IMR-90 (cell line): ENCODE measurements at regions of chr6 and their contacts with region 1.

Region 1: DNA sequence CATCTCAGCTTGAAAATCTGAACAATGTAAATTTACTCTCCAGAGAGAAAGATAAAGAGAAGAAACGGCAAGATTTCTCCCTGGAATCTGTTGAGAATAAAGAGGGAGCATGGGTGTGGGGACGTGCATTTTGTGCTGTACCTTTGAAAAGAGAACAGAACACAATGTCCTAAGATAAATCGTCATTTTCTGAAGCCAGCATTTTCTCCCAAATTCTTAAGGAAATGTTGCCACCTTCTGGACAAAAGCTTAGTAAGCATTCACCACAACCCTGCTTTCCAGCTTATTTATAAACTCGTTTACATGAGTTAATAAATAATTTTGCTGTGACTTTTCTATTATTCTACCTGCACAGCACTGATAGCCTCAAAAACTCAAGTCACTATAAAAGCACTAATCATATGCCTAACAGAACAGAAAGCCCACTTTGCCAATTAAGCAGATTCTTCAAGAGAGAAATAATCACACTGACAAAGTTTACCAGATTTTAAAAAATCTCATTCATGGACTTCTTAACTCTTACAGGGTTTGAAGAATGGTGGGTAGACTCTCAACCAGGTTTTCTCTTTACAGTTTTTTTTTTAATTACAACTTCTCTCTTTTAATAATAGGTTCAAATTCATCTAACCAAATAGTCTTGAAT is 155.8 kb downstream of the MBOAT1 start:
- DNase-seq: peak; percentile 63
- ATAC-seq: peak; percentile 61; the same call in 1 of the 2 replicates
- H3K4me3 ChIP-seq: no peak overlapping the region
- H3K27ac ChIP-seq: no peak overlapping the region
- H3K4me1 ChIP-seq: no peaks in the 10 kb centered on the region
- H3K27me3 ChIP-seq: no peaks in the 10 kb centered on the region; the same call in 1 of the 2 replicates
- CTCF ChIP-seq: peak; percentile 74
- POLR2A ChIP-seq: no peak
- RAD21 ChIP-seq: peak; percentile 72

Region 2: DNA sequence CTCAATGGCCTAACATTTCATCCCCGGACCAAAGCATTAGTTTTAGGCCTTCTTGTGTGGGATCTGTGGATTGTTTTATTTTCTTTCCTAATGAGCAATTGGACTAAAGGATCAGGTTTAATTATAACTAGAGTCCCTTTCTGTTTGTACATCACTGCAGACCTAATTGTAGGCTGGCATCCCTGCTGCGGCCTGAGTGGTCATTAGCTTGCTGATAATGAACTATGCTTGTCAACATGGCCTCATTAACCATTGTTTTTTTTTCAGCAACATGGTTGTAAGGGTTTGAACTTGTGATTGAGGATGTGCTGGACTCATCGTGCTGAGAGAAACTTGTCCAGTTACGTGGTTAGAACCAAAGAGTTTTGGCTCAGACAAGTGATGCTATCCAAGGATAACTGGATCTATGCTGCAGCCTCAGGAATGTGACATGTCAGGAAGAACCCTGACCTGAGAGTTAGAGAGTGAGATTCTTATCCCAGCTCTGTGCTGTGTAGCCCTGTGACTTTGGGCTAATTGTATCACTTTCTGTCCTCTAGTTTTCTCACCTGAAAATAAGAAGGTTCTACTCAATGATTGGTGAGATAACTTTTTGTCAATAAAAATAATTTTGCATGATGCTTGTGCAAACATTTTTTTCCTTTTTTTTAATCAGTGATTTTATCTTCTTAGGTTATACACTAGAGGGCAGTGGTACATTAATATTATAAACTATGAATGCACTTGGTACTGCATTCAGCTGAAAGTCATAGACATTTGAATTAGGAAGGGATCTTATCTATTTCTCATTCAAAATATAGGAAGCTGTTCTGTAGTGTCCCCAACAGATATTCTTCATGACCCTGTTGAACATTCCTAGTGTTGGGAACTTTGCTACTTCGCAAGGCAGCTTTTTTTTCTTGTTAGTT is 1528.4 kb before region 1 on chr6:
- CTCF ChIA-PET with region 1: no interaction called
- POLR2A ChIA-PET with region 1: no interaction called
- dilution Hi-C with region 1: no loop called
- in situ Hi-C with region 1: no loop called
- intact Hi-C with region 1: loop called (anchors 1 kb)
- DNase-seq: peak; percentile 13
- ATAC-seq: peak; percentile 65
- H3K4me3 ChIP-seq: no peak overlapping the region
- H3K27ac ChIP-seq: no peak overlapping the region
- H3K4me1 ChIP-seq: no peaks in the 10 kb centered on the region
- H3K27me3 ChIP-seq: peaks cover 9% of the 10 kb centered on the region; the same call in 1 of the 2 replicates
- CTCF ChIP-seq: peak; percentile 45
- POLR2A ChIP-seq: no peak
- RAD21 ChIP-seq: peak; percentile 39

Region 3: GRCh38 chr6:18595774-18596530 is 1460.5 kb before region 1 on chr6:
- CTCF ChIA-PET with region 1: interaction called, 10 read pairs
- POLR2A ChIA-PET with region 1: interaction called, 8 read pairs
- dilution Hi-C with region 1: no loop called
- in situ Hi-C with region 1: loop called (anchors 10 kb)
- intact Hi-C with region 1: loop called (anchors 1 kb)
- DNase-seq: peak; percentile 63
- ATAC-seq: peak; percentile 99
- H3K4me3 ChIP-seq: no peak overlapping the region
- H3K27ac ChIP-seq: no peak overlapping the region
- H3K4me1 ChIP-seq: no peaks in the 10 kb centered on the region
- H3K27me3 ChIP-seq: no peaks in the 10 kb centered on the region; the same call in 1 of the 2 replicates
- CTCF ChIP-seq: peak; percentile 89
- POLR2A ChIP-seq: no peak
- RAD21 ChIP-seq: peak; percentile 82

Region 4: DNA sequence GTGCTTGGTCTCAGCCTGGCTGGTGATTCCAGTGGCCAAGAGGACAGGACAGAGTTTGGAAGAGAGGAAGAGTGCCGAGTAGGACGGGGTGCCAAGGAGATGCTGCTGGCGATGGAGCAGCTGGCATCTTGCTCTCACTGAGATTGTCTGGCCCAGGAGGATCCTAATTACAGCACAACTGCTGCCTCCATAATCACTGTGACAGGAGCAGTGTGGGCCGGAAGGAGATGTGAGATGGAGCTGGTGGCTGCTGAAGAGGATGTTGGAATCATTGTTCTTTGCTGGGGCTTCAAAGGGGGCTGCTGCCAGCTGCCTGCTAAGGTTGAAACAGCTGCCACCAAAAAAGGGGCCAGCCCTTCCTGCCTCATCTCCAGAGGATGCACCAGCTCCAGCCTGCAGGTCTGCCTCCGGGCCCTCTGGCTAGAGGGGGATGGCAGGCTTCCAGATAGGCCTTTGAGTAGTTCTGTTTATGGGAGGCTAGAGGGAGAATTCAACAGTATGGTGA is 1454.9 kb before region 1 on chr6:
- CTCF ChIA-PET with region 1: interaction called, 10 read pairs
- POLR2A ChIA-PET with region 1: interaction called, 8 read pairs
- dilution Hi-C with region 1: no loop called
- in situ Hi-C with region 1: loop called (anchors 10 kb)
- intact Hi-C with region 1: loop called (anchors 1 kb)
- DNase-seq: no peak
- ATAC-seq: no peak
- H3K4me3 ChIP-seq: no peak overlapping the region
- H3K27ac ChIP-seq: no peak overlapping the region
- H3K4me1 ChIP-seq: no peaks in the 10 kb centered on the region
- H3K27me3 ChIP-seq: no peaks in the 10 kb centered on the region
- CTCF ChIP-seq: no peak
- POLR2A ChIP-seq: no peak
- RAD21 ChIP-seq: no peak

Region 5: DNA sequence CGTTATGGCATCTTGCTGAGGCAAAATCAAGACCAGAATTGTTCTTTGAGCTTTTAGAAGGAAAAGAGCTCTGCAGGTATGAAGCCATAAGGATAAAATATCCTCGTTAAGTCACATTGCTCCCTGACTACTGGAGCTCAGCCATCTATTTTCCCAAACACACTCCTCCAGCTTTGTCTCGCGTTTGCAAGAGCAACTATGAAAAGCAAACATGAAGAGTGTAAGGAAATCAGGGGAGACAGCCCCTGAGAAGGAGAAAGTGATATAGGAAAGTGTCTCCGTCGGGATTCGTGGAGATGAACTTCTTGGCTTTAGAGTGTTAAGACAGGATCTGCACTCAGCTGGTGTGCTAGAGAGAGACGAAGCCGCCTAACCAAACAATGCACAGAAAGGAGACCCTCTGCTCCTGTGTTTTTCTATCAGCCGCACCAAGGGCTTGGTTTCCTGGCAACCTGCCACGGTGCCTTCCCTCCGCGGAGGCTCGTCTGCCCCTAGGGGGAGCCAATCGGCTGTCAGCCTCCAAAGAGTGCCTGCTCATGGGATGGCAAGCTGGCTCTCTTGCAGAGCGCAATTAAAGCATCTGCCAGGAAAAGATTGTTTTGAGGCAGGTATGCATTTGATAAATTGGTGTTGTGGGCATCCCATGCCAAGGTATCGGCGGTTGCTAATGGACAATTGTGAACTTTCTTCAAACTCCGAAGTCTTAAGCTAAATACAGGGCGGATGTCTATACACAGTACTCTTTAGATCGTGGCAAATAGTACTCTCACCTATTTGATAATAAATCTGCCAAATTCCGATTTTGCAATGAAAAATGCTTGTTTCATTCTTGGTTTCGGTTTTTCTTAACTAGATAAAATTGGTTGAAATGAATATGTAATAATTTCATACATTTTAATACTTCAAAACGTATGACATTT is 1066.2 kb before region 1 on chr6:
- CTCF ChIA-PET with region 1: no interaction called
- POLR2A ChIA-PET with region 1: no interaction called
- dilution Hi-C with region 1: no loop called
- in situ Hi-C with region 1: no loop called
- intact Hi-C with region 1: loop called (anchors 10 kb)
- DNase-seq: peak; percentile 20
- ATAC-seq: no peak
- H3K4me3 ChIP-seq: no peak overlapping the region
- H3K27ac ChIP-seq: no peak overlapping the region
- H3K4me1 ChIP-seq: no peaks in the 10 kb centered on the region
- H3K27me3 ChIP-seq: no peaks in the 10 kb centered on the region
- CTCF ChIP-seq: peak; percentile 44
- POLR2A ChIP-seq: no peak
- RAD21 ChIP-seq: peak; percentile 51

Region 6: DNA sequence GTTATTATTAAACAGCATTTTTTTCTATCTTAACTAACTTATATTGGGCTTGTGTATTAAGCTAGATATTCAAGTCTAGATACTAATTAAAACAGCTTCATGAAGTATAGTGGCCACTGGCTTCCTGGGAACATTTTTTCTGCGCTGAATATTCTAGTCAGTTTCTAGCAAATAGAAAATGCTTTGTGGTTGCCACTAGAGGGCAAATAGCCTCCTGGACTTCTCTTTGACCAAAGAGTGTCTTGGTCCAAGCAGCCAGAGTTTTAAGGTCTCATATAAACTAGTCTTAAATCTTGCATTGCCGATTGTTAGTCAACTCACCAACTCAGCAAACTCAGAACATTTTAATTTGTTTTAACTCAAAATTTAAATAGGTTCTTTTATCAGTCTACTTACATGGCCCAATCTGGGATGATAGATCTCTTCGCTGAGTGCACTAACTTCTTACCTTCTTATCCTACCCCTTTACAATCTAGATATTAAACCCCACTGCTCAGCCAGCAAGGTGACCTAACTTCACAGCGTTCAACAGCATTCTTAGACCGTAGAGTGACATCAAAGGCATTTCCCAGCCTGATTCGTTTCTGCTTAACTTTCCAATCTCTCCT is 243.9 kb before region 1 on chr6:
- CTCF ChIA-PET with region 1: no interaction called
- POLR2A ChIA-PET with region 1: no interaction called
- dilution Hi-C with region 1: no loop called
- in situ Hi-C with region 1: no loop called
- intact Hi-C with region 1: loop called (anchors 10 kb)
- DNase-seq: peak; percentile 61
- ATAC-seq: peak; percentile 87
- H3K4me3 ChIP-seq: no peak overlapping the region
- H3K27ac ChIP-seq: no peak overlapping the region
- H3K4me1 ChIP-seq: no peaks in the 10 kb centered on the region
- H3K27me3 ChIP-seq: no peaks in the 10 kb centered on the region; the same call in 1 of the 2 replicates
- CTCF ChIP-seq: peak; percentile 67
- POLR2A ChIP-seq: no peak
- RAD21 ChIP-seq: peak; percentile 62

Region 7: DNA sequence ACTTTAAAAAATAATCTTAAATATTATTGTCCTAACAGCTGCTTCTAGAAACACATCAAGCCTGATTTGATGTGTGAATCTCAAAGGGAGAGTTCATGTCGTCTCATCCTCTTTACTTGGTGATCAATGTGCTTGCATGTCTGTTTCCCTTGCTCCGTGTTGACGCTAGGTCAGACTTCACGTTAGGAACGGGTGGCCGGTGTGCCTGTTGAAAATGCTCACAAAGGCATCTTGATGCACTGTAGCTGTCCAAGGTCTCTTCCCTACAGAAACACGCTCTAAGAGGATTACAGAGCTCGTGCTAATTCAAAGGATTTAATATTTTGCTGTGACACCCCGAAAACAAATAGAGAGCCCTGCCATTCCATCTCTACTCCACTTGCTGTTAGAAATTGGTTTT is 134.7 kb before region 1 on chr6:
- CTCF ChIA-PET with region 1: no interaction called
- POLR2A ChIA-PET with region 1: no interaction called
- dilution Hi-C with region 1: no loop called
- in situ Hi-C with region 1: no loop called
- intact Hi-C with region 1: no loop called
- DNase-seq: no peak
- ATAC-seq: no peak
- H3K4me3 ChIP-seq: no peak overlapping the region
- H3K27ac ChIP-seq: no peak overlapping the region
- H3K4me1 ChIP-seq: no peaks in the 10 kb centered on the region
- H3K27me3 ChIP-seq: no peaks in the 10 kb centered on the region
- CTCF ChIP-seq: no peak
- POLR2A ChIP-seq: no peak
- RAD21 ChIP-seq: no peak

Region 8: GRCh38 chr6:20366091-20366832 is 309.8 kb after region 1 on chr6:
- CTCF ChIA-PET with region 1: no interaction called
- POLR2A ChIA-PET with region 1: no interaction called
- dilution Hi-C with region 1: no loop called
- in situ Hi-C with region 1: no loop called
- intact Hi-C with region 1: no loop called
- DNase-seq: no peak
- ATAC-seq: no peak
- H3K4me3 ChIP-seq: no peak overlapping the region
- H3K27ac ChIP-seq: no peak overlapping the region
- H3K4me1 ChIP-seq: peaks cover 4% of the 10 kb centered on the region
- H3K27me3 ChIP-seq: no peaks in the 10 kb centered on the region
- CTCF ChIP-seq: no peak
- POLR2A ChIP-seq: no peak
- RAD21 ChIP-seq: no peak